ENCODE measurements at regions of chr10 and their contacts with region 1.

Region 1: GRCh38 chr10:59303018-59303417 is 59.3 kb downstream of the FAM13C start:
- DNase-seq: no peak
- ATAC-seq: peak; percentile 70
- H3K4me3 ChIP-seq: no peak overlapping the region
- H3K27ac ChIP-seq: no peak overlapping the region
- H3K4me1 ChIP-seq: no peaks in the 10 kb centered on the region
- H3K27me3 ChIP-seq: no peaks in the 10 kb centered on the region
- CTCF ChIP-seq: no peak
- EP300 ChIP-seq: no peak
- POLR2A ChIP-seq: no peak
- RAD21 ChIP-seq: no peak

Region 2: GRCh38 chr10:58360391-58361004 is 942.5 kb before region 1 on chr10:
- CTCF ChIA-PET with region 1: no interaction called
- POLR2A ChIA-PET with region 1: no interaction called
- RAD21 ChIA-PET with region 1: no interaction called
- SMC1A ChIA-PET with region 1: no interaction called
- in situ Hi-C with region 1: no loop called
- intact Hi-C with region 1: no loop called
- DNase-seq: no peak
- ATAC-seq: no peak
- H3K4me3 ChIP-seq: no peak overlapping the region
- H3K27ac ChIP-seq: no peak overlapping the region
- H3K4me1 ChIP-seq: no peaks in the 10 kb centered on the region
- H3K27me3 ChIP-seq: no peaks in the 10 kb centered on the region
- CTCF ChIP-seq: no peak
- EP300 ChIP-seq: no peak
- POLR2A ChIP-seq: no peak
- RAD21 ChIP-seq: no peak

Region 3: GRCh38 chr10:59290448-59290847 is 12.6 kb before region 1 on chr10:
- CTCF ChIA-PET with region 1: interaction called, 17 read pairs
- POLR2A ChIA-PET with region 1: no interaction called
- RAD21 ChIA-PET with region 1: no interaction called
- SMC1A ChIA-PET with region 1: interaction called, 11 read pairs
- in situ Hi-C with region 1: no loop called
- intact Hi-C with region 1: no loop called
- DNase-seq: no peak
- ATAC-seq: peak; percentile 57
- H3K4me3 ChIP-seq: no peak overlapping the region
- H3K27ac ChIP-seq: no peak overlapping the region
- H3K4me1 ChIP-seq: no peaks in the 10 kb centered on the region
- H3K27me3 ChIP-seq: 0 out of 4 replicates have a peak, but pooled peaks cover 0 to 1% of the 10 kb centered on the region in 2 experiments
- CTCF ChIP-seq: peak; percentile 16 to 38 (median 27); a peak in 4 of 6 replicates
- EP300 ChIP-seq: no peak
- POLR2A ChIP-seq: no peak
- RAD21 ChIP-seq: peak; percentile 51

Region 4: GRCh38 chr10:59372543-59372942 is 69.5 kb after region 1 on chr10:
- CTCF ChIA-PET with region 1: no interaction called
- POLR2A ChIA-PET with region 1: no interaction called
- RAD21 ChIA-PET with region 1: no interaction called
- SMC1A ChIA-PET with region 1: no interaction called
- in situ Hi-C with region 1: no loop called
- intact Hi-C with region 1: no loop called
- DNase-seq: no peak
- ATAC-seq: no peak
- H3K4me3 ChIP-seq: no peak overlapping the region
- H3K27ac ChIP-seq: no peak overlapping the region
- H3K4me1 ChIP-seq: no peaks in the 10 kb centered on the region
- H3K27me3 ChIP-seq: no peaks in the 10 kb centered on the region; a peak in 1 of 4 replicates
- CTCF ChIP-seq: no peak
- EP300 ChIP-seq: no peak
- POLR2A ChIP-seq: no peak
- RAD21 ChIP-seq: no peak

Measured in GM12878 (cell line).